Naive thymus-derived CD4-positive, alpha-beta T cell (primary cell): ENCODE measurements at regions of chr4 and their contacts with region 1.

Region 1: DNA sequence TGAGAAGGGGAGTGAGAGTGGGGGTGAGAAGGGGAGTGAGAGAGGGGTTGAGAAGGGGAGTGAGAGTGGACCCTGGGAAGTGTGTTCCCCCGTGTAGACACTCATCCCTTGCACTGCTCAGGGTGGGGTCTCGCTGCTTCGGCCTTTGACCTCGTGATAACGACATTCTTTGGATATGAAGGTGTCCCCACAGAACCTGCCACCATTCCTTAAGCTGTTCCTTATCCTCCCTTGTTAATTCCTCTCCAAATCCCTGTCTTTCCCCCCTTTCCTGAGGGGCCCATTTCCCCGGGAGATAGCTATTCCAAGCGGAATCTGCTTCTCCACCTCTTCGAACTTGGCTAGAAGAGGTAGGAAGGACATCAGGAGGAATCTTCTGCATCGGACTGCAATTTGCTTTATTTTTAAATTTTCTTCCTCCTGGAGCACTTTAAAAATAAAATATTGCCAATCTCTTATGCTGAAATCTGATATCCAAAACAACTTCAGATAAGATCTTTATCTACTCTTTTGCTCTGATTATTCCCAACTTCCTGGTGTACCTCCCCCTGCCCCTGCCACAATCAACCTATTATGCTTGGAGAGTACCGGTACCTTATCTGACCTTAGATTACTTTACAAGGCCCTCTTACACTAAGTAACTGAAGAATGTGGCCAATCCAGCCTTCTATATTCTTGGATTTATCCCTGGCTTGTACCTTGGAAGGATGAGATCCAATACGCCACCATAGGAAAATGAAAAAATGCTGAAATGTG is 15.6 kb downstream of the TRIML1 start:
- DNase-seq: no peak
- ATAC-seq: peak; percentile 14
- H3K4me3 ChIP-seq: no peak overlapping the region
- H3K4me3 Mint-ChIP-seq: no peak overlapping the region
- H3K27ac ChIP-seq: no peak overlapping the region
- H3K27ac Mint-ChIP-seq: no peak overlapping the region
- H3K4me1 ChIP-seq: no peaks in the 10 kb centered on the region
- H3K4me1 Mint-ChIP-seq: no peaks in the 10 kb centered on the region
- H3K27me3 ChIP-seq: no peaks in the 10 kb centered on the region
- H3K27me3 Mint-ChIP-seq: no peaks in the 10 kb centered on the region

Region 2: GRCh38 chr4:186449954-186450353 is 1704.9 kb before region 1 on chr4:
- CTCF ChIA-PET with region 1: no interaction called
- POLR2A ChIA-PET with region 1: no interaction called
- intact Hi-C with region 1: loop called in 1 of 2 experiments (anchors 10 kb)
- DNase-seq: no peak
- ATAC-seq: no peak
- H3K4me3 ChIP-seq: no peak overlapping the region
- H3K4me3 Mint-ChIP-seq: no peak overlapping the region
- H3K27ac ChIP-seq: no peak overlapping the region
- H3K27ac Mint-ChIP-seq: no peak overlapping the region
- H3K4me1 ChIP-seq: no peaks in the 10 kb centered on the region
- H3K4me1 Mint-ChIP-seq: no peaks in the 10 kb centered on the region
- H3K27me3 ChIP-seq: no peaks in the 10 kb centered on the region
- H3K27me3 Mint-ChIP-seq: no peaks in the 10 kb centered on the region

Region 3: DNA sequence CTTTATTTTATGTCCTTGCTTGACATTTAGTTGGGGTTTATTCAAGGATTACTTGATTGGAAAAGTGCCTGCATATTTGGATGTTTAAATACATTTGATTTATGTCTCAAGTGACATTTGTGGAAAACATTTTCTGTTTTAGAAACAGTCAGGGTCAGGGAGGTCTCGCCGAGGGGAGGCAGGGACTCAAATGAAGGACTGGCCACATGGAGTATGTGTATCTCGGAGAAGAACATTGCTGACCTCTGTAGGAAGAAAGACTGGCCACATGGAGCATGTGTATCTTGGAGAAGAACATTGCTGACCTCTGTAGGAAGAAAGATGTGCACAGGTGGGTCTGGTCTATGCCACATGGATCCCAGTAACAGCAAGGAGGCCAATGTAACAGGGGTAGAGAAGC is 218.0 kb after region 1 on chr4:
- CTCF ChIA-PET with region 1: no interaction called
- POLR2A ChIA-PET with region 1: no interaction called
- intact Hi-C with region 1: no loop called
- DNase-seq: no peak
- ATAC-seq: no peak
- H3K4me3 ChIP-seq: no peak overlapping the region
- H3K4me3 Mint-ChIP-seq: no peak overlapping the region
- H3K27ac ChIP-seq: no peak overlapping the region
- H3K27ac Mint-ChIP-seq: no peak overlapping the region
- H3K4me1 ChIP-seq: no peaks in the 10 kb centered on the region
- H3K4me1 Mint-ChIP-seq: no peaks in the 10 kb centered on the region
- H3K27me3 ChIP-seq: no peaks in the 10 kb centered on the region
- H3K27me3 Mint-ChIP-seq: no peaks in the 10 kb centered on the region